Ascending aorta (tissue), 2 donors: ENCODE measurements at regions of chr9 and their contacts with region 1.

Region 1: GRCh38 chr9:136631038-136632000 is 31.4 kb upstream of the EGFL7 start:
- DNase-seq: peak in 1 of 2 donors; percentile 84
- H3K4me3 ChIP-seq: no peak overlapping the region
- H3K27ac ChIP-seq: no peak overlapping the region
- H3K4me1 ChIP-seq: peaks cover under 1% of the 10 kb centered on the region in 2 donors
- H3K27me3 ChIP-seq: no peaks in the 10 kb centered on the region
- CTCF ChIP-seq: peak; percentile 74 to 92 (median 84)

Region 2: DNA sequence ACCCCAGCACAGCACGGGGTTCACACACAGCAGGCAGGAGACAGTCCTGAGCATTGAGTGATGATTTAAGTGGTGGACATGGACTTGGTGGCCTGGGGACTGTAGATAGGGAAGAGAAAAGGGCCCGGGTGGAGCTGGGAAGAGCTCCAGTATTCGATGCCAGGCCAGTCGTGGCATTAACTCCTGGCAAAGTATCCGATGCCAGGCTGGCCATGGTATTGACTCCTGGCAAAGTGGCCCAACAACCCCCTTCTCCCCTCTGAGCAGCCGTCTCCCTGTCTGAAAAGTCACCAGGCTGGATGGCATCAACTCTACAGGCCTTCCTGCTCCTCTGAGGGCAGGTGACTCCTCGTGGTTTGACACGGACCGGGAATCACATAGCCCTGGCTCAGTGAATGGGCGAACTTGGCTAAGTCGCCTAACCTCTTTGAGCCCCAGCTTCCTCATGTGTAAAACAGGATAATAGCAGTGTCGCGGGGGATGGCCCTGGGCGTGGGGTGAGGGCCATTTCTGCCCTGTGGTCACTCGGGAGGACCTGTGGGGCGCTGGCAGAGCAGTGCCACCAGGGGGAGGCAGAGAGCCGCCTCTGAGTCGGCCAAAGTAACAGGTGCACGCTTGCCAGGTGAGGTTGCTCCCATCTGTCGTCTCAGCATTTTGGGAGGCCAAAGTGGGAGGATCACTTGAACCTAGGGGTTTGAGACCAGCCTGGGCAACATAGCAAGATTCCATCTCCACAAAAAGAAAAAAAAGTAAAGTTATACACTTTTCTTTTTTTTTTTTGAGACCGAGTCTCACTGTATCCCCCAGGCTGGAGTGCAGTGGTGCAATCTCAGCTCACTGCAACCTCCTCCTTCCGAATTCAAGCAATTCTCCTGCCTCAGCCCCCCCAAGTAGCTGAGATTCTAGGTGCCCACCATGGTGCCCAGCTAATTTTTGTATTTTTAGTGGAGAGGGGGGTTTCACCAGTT is 142.8 kb before region 1 on chr9:
- intact Hi-C with region 1: loop called (anchors 1 kb)
- DNase-seq: peak in 1 of 2 donors; percentile 86
- H3K4me3 ChIP-seq: no peak overlapping the region
- H3K27ac ChIP-seq: no peak overlapping the region
- H3K4me1 ChIP-seq: peaks cover 7 to 12% of the 10 kb centered on the region in 2 donors
- H3K27me3 ChIP-seq: no peaks in the 10 kb centered on the region
- CTCF ChIP-seq: peak; percentile 93 to 98 (median 97)

Region 3: GRCh38 chr9:136655536-136656182 is 24.3 kb after region 1 on chr9:
- intact Hi-C with region 1: no loop called
- DNase-seq: no peak
- H3K4me3 ChIP-seq: no peak overlapping the region
- H3K27ac ChIP-seq: peak overlapping the region in 1 of 2 donors; percentile 56
- H3K4me1 ChIP-seq: no peaks in the 10 kb centered on the region
- H3K27me3 ChIP-seq: peaks cover 10% of the 10 kb centered on the region
- CTCF ChIP-seq: no peak